HAP-1 (cell line): ENCODE measurements at regions of chr13 and their contacts with region 1.

Region 1: GRCh38 chr13:31236211-31236786 is 36.5 kb downstream of the B3GLCT start:
- DNase-seq: peak; percentile 30 to 48
- H3K4me3 ChIP-seq: no peak overlapping the region
- H3K4me1 ChIP-seq: no peaks in the 10 kb centered on the region
- H3K27me3 ChIP-seq: no peaks in the 10 kb centered on the region

Region 2: GRCh38 chr13:31424117-31424729 is 187.9 kb after region 1 on chr13:
- in situ Hi-C with region 1: loop called (anchors 5 kb)
- DNase-seq: peak; percentile 63 to 84
- H3K4me3 ChIP-seq: no peak overlapping the region
- H3K4me1 ChIP-seq: peaks cover 5% of the 10 kb centered on the region
- H3K27me3 ChIP-seq: no peaks in the 10 kb centered on the region